GM12878 (cell line): ENCODE measurements at regions of chr12 and their contacts with region 1.

Region 1: GRCh38 chr12:47797441-47797840 is 22.3 kb downstream of the HDAC7 start:
- DNase-seq: no peak
- ATAC-seq: peak; percentile 89
- H3K4me3 ChIP-seq: no peak overlapping the region
- H3K27ac ChIP-seq: no peak overlapping the region
- H3K4me1 ChIP-seq: peaks cover 1% of the 10 kb centered on the region
- H3K27me3 ChIP-seq: no peaks in the 10 kb centered on the region; a peak in 1 of 4 replicates
- CTCF ChIP-seq: peak; percentile 63 to 74 (median 65)
- EP300 ChIP-seq: no peak
- POLR2A ChIP-seq: no peak
- RAD21 ChIP-seq: peak; percentile 77

Region 2: DNA sequence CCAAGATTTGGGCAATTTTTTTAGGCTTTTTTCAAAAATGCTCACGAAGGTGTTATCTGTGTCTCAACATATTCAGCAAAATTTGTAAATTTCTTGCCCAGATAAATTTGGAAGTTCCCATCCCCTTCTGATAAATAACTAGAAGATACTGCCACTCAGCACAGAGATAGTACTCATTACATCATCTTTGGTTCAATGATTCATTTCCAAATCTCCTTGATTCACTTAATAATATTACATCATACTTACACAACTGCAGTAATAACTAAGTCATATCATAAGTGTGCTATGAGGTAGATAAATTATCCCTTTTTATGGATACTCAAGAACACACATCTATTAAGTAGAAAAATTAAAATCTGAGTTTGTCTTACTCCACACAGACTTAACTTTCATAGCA is 181.0 kb before region 1 on chr12:
- CTCF ChIA-PET with region 1: no interaction called
- POLR2A ChIA-PET with region 1: no interaction called
- RAD21 ChIA-PET with region 1: no interaction called
- SMC1A ChIA-PET with region 1: no interaction called
- in situ Hi-C with region 1: no loop called
- intact Hi-C with region 1: no loop called
- DNase-seq: no peak
- ATAC-seq: no peak
- H3K4me3 ChIP-seq: no peak overlapping the region
- H3K27ac ChIP-seq: no peak overlapping the region
- H3K4me1 ChIP-seq: no peaks in the 10 kb centered on the region
- H3K27me3 ChIP-seq: no peaks in the 10 kb centered on the region
- CTCF ChIP-seq: no peak
- EP300 ChIP-seq: no peak
- POLR2A ChIP-seq: no peak
- RAD21 ChIP-seq: no peak

Region 3: DNA sequence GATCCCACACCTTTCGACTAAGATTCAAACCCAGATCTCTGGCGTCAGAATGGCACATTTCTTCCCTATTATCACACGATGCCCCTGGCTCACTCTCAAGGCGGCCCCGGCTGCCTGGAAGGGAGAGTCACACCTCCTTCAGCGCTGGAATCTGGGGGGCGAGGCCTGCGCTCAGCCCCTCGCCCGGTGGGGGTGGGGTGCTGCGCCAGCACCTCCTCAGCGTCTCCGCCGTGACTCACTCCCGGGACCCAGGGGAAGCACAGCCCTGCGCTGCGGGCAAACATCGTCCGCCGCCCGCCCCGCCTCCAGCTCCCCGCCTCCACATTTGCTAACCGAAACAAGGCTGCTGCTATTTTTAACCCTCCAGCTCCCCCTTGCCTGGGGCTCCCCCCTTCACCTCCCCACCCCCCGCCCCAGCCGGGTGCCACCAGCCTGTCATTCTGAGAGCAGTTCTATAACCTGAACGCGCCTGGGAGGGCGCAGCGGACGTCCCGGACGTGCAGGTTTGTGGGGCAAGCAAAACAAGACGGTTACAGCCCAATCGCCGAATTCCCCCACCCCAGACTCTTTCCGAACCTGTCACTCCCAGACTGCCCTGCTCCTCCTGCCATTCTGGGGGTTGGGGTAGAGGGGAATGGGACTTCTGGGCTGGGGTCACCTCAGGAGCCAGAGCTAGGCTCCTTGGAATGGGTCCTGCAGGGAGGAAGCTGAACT is 15.5 kb after region 1 on chr12:
- CTCF ChIA-PET with region 1: interaction called, 13 read pairs
- POLR2A ChIA-PET with region 1: no interaction called
- RAD21 ChIA-PET with region 1: interaction called, 16 read pairs
- SMC1A ChIA-PET with region 1: interaction called, 13 read pairs
- in situ Hi-C with region 1: no loop called
- intact Hi-C with region 1: no loop called
- DNase-seq: peak; percentile 73
- ATAC-seq: peak; percentile 83
- H3K4me3 ChIP-seq: peak overlapping the region; percentile 75
- H3K27ac ChIP-seq: peak overlapping the region; percentile 85
- H3K4me1 ChIP-seq: peaks cover 80% of the 10 kb centered on the region
- H3K27me3 ChIP-seq: no peaks in the 10 kb centered on the region; a peak in 2 of 4 replicates
- CTCF ChIP-seq: peak in 1 of 3 experiments; percentile 25; a peak in 2 of 6 replicates
- EP300 ChIP-seq: peak; percentile 16 to 31; a peak in 1 of 4 replicates
- POLR2A ChIP-seq: peak; percentile 88
- RAD21 ChIP-seq: peak; percentile 35; the same call in 1 of the 2 replicates

Region 4: DNA sequence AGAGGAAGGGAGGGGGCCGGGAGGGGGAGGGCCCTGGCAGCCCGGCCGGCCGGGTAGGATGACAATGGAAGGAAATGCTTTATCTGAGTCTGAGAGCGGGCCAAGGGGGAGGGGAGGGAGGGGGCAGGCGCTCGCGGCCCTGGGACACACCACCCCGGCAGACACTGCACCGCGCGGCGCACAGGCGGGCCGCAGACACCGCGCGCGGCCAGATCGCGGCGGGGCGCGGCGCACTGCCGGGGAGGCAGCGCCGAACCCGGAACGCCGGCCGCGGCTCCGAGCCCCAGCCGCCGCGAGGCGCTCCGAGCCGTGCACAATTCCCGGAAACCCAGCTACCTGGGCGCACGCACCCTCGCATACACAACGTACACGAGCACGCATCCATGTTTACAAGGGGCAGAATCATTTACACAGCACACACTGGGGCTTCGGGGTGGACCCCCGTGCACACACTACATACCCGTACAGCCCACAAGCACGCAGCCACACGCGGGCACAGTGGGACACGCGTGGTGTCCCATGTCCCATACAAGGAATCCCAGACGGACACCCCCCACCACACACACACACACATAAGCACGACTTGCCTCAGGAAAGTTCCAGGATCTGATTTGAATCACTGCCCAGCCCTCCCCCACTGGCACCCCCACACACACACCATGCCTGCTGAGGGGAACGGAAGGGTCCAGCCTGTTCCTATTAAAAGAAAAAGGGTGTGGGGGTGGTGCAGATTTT is 22.6 kb after region 1 on chr12 and contains the start of gene HDAC7:
- CTCF ChIA-PET with region 1: interaction called, 11 read pairs
- POLR2A ChIA-PET with region 1: no interaction called
- RAD21 ChIA-PET with region 1: interaction called, 16 read pairs
- SMC1A ChIA-PET with region 1: interaction called, 3 read pairs
- in situ Hi-C with region 1: no loop called
- intact Hi-C with region 1: no loop called
- DNase-seq: no peak
- ATAC-seq: peak; percentile 64
- H3K4me3 ChIP-seq: peak within 1 kb of the TSS; percentile 80
- H3K27ac ChIP-seq: peak within 1 kb of the TSS; percentile 46
- H3K4me1 ChIP-seq: peaks cover 27% of the 10 kb centered on the region
- H3K27me3 ChIP-seq: peaks cover 0 to 7% of the 10 kb centered on the region in 2 experiments; a peak in 3 of 4 replicates
- CTCF ChIP-seq: peak in 1 of 3 experiments; percentile 10; a peak in 1 of 6 replicates
- EP300 ChIP-seq: no peak
- POLR2A ChIP-seq: peak; percentile 79
- RAD21 ChIP-seq: no peak
- polyA plus RNA-seq, gene HDAC7: 0.47 to 1.3 TPM